RWPE1 (cell line): ENCODE measurements at regions of chr17 and their contacts with region 1.

Region 1: DNA sequence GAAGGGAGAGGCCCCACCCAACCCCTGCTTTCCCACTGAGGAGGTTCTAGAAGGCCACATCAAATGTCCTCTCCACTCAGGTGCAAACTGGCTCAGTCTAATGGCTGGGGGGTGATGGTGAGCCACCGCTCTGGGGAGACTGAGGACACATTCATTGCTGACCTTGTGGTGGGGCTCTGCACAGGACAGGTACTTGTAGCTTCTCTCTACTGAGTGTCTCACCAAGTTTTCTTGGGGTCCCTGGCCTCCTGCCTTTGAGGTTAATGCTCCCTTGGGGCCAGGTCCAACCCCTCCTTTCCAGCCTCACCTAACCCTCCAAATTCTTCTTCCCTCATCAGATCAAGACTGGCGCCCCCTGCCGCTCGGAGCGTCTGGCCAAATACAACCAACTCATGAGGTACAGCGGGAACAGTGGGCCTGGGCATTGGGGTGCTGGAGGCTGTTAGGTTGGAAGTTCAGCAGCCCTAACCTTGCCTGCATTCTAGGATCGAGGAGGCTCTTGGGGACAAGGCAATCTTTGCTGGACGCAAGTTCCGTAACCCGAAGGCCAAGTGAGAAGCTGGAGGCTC is 5.7 kb downstream of the ENO3 start:
- DNase-seq: no peak
- H3K27ac ChIP-seq: peak overlapping the region; percentile 37; the same call in 1 of the 2 replicates
- CTCF ChIP-seq: no peak

Region 2: DNA sequence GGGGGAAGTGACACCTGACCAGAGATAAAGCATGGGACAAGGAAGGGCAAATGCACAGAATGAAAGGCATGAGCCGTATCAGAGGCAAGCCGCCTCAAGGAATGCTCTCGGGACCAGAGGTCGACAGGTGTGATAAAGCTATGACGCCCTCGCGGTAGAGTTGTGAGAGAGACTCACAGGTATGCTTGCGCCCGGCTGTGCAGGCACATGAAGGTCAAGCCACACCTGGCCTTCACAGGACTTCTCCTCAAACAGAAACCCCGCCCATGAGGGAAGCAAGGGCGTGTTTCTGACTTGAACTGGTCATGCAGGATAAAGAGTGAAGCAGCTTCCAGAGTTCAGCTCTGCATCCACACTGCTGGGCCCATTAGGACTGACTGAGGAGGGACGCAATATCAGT is 1118.4 kb before region 1 on chr17:
- CTCF ChIA-PET with region 1: no interaction called
- POLR2A ChIA-PET with region 1: interaction called, 10 read pairs
- DNase-seq: peak; percentile 38
- H3K27ac ChIP-seq: no peak overlapping the region; the same call in 1 of the 2 replicates
- CTCF ChIP-seq: no peak